OCI-LY7 (cell line): ENCODE measurements at regions of chr5 and their contacts with region 1.

Region 1: GRCh38 chr5:59007460-59008063 is 424.7 kb downstream of the RAB3C start:
- DNase-seq: peak; percentile 16
- H3K4me3 ChIP-seq: no peak overlapping the region
- H3K27ac ChIP-seq: no peak overlapping the region
- H3K4me1 ChIP-seq: no peaks in the 10 kb centered on the region
- CTCF ChIP-seq: peak; percentile 76

Region 2: GRCh38 chr5:58886315-58887207 is 121.0 kb before region 1 on chr5:
- CTCF ChIA-PET with region 1: no interaction called
- POLR2A ChIA-PET with region 1: no interaction called
- intact Hi-C with region 1: loop called (anchors 5 kb)
- DNase-seq: peak; percentile 57
- H3K4me3 ChIP-seq: no peak overlapping the region
- H3K27ac ChIP-seq: no peak overlapping the region
- H3K4me1 ChIP-seq: no peaks in the 10 kb centered on the region
- CTCF ChIP-seq: peak; percentile 94